Activated CD8-positive, alpha-beta T cell treated with anti-CD3 and anti-CD28 coated beads, Interleukin-2, amount 10 ng/mL, durations not matched to agents 7 days and 5 days (primary cell): ENCODE measurements at regions of chr16 and their contacts with region 1.

Region 1: GRCh38 chr16:50024684-50025536 is at the start of gene CNEP1R1:
- DNase-seq: peak; percentile 95
- ATAC-seq: peak; percentile 99
- H3K4me3 Mint-ChIP-seq: peak within 1 kb of the TSS; percentile 94
- H3K27ac Mint-ChIP-seq: peak within 1 kb of the TSS; percentile 92
- H3K4me1 Mint-ChIP-seq: peaks cover 14% of the 10 kb centered on the region
- H3K27me3 Mint-ChIP-seq: peaks cover 4% of the 10 kb centered on the region
- total RNA-seq, gene CNEP1R1: 25.1 to 26.9 TPM

Region 2: GRCh38 chr16:49839017-49839825 is 185.7 kb before region 1 on chr16:
- CTCF ChIA-PET with region 1: no interaction called
- POLR2A ChIA-PET with region 1: no interaction called
- DNase-seq: no peak
- ATAC-seq: no peak
- H3K4me3 Mint-ChIP-seq: no peak overlapping the region
- H3K27ac Mint-ChIP-seq: no peak overlapping the region
- H3K4me1 Mint-ChIP-seq: no peaks in the 10 kb centered on the region
- H3K27me3 Mint-ChIP-seq: peaks cover 21% of the 10 kb centered on the region

Region 3: GRCh38 chr16:49977427-49977826 is 47.5 kb before region 1 on chr16:
- CTCF ChIA-PET with region 1: no interaction called
- POLR2A ChIA-PET with region 1: no interaction called
- DNase-seq: no peak
- ATAC-seq: no peak
- H3K4me3 Mint-ChIP-seq: no peak overlapping the region
- H3K27ac Mint-ChIP-seq: no peak overlapping the region
- H3K4me1 Mint-ChIP-seq: no peaks in the 10 kb centered on the region
- H3K27me3 Mint-ChIP-seq: peaks cover 5% of the 10 kb centered on the region

Region 4: DNA sequence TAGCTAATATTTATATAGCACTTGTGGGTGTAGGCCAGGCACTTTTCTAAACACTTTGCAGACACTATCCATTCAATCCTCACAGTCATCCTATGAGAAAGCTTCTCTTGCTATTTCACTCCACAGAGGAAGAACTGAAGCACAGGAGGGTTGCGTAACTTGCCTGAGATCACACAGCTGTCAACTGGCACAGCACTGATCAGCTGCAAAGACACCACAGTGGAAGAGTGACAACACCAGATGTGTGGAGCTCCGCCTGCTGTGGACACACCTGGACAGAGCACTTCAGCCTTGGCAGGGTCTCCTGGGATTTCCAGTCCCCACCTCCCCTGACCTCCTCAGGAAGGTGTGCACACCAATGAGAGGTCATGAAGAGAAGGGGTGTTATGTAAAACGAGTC is 13.2 kb before region 1 on chr16:
- CTCF ChIA-PET with region 1: interaction called, 12 read pairs
- POLR2A ChIA-PET with region 1: no interaction called
- DNase-seq: no peak
- ATAC-seq: no peak
- H3K4me3 Mint-ChIP-seq: no peak overlapping the region
- H3K27ac Mint-ChIP-seq: no peak overlapping the region
- H3K4me1 Mint-ChIP-seq: no peaks in the 10 kb centered on the region
- H3K27me3 Mint-ChIP-seq: peaks cover 2% of the 10 kb centered on the region

Region 5: DNA sequence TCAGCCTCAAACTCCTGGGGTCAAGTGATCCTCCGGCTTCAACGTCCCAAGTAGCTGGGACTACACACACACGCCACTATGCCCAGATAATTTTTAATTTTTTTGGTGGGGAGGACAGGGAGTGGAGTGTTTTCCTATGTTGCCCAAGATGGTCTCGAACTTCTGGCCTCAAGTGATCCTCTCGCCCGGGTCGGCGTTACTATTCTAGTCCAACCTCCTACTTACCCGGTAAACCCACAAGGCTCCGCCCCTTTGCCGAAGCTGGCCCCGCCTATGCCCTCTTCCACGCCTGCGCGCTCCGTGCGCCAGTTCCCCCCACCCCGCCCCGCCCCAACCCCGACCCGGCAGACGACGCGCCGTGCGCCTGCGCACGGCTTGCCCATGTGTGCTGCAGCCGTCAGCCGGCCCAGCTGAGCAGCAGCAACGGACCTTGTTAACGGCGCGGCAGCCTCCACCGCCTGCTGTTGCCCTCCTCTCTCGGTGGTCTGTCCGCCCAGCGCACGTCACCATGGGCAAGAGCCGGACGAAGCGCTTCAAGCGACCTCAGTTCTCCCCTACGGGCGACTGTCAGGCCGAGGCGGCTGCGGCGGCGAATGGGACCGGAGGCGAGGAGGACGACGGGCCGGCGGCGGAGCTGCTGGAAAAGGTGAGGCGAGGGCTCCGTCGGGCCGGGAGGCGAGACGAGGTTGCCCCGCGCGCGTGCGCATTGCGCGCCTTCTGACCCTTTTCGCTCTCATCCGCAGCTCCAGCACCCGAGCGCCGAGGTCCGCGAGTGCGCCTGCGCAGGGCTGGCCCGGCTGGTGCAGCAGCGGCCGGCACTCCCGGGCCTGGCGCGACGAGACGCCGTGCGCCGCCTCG is 40.9 kb after region 1 on chr16 and contains the start of gene HEATR3:
- CTCF ChIA-PET with region 1: interaction called, 104 read pairs
- POLR2A ChIA-PET with region 1: interaction called, 3 read pairs
- DNase-seq: peak; percentile 95
- ATAC-seq: peak; percentile 92
- H3K4me3 Mint-ChIP-seq: peak within 1 kb of the TSS; percentile 90
- H3K27ac Mint-ChIP-seq: peak within 1 kb of the TSS; percentile 94
- H3K4me1 Mint-ChIP-seq: peaks cover 39% of the 10 kb centered on the region
- H3K27me3 Mint-ChIP-seq: peaks cover 3% of the 10 kb centered on the region
- total RNA-seq, gene HEATR3: 29.7 to 31.7 TPM

Region 6: GRCh38 chr16:50152807-50153452 is 128.0 kb after region 1 on chr16 and contains the start of gene TENT4B:
- CTCF ChIA-PET with region 1: interaction called, 23 read pairs
- POLR2A ChIA-PET with region 1: no interaction called
- DNase-seq: peak; percentile 91
- ATAC-seq: peak; percentile 80
- H3K4me3 Mint-ChIP-seq: peak within 1 kb of the TSS; percentile 88
- H3K27ac Mint-ChIP-seq: peak within 1 kb of the TSS; percentile 95
- H3K4me1 Mint-ChIP-seq: peaks cover 32% of the 10 kb centered on the region
- H3K27me3 Mint-ChIP-seq: no peaks in the 10 kb centered on the region
- total RNA-seq, gene TENT4B: 17.3 to 18.0 TPM

Region 7: DNA sequence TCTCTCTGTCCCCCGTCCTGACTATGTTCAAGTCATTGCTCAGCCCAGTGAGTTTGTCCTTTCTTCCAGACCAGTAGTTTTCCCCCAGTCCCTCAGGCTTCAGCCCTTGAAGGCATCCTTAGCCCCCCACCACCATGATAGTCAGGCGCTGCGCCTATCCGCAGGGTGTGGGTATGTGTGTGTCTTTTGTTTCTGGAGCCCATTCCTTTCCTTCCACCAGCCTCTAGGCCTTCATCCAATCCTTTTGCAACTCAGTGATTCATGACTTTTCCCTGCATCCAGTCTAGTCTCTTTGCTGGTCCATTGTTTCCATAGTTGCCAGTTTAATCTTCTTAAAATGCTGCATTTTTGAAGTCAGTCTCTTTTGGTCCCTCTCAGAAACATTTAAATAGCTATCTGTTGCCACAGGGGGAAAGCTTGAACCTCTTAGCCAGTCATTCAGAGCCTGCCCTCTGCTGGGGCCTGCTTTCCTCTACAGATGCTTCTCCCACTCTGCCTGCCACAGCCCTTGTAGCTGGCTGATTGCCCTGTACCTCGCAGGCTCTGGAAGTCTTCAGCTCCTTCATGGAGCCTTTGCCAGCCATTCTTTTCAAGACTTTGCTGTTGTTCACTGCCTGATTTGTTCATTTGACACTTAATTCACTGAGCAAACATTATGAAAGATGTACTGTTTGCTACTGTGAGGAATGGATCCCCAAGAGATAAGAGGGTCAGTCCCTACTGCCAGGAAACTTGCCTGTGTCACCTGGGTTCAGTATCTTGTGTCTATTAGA is 185.5 kb after region 1 on chr16:
- CTCF ChIA-PET with region 1: interaction called, 135 read pairs
- POLR2A ChIA-PET with region 1: interaction called, 10 read pairs
- DNase-seq: peak; percentile 80
- ATAC-seq: peak; percentile 95
- H3K4me3 Mint-ChIP-seq: no peak overlapping the region
- H3K27ac Mint-ChIP-seq: peak overlapping the region; percentile 41
- H3K4me1 Mint-ChIP-seq: peaks cover 32% of the 10 kb centered on the region
- H3K27me3 Mint-ChIP-seq: no peaks in the 10 kb centered on the region

Region 8: GRCh38 chr16:50354629-50355456 is 329.9 kb after region 1 on chr16:
- CTCF ChIA-PET with region 1: interaction called, 27 read pairs
- POLR2A ChIA-PET with region 1: interaction called, 3 read pairs
- DNase-seq: no peak
- ATAC-seq: no peak
- H3K4me3 Mint-ChIP-seq: no peak overlapping the region
- H3K27ac Mint-ChIP-seq: no peak overlapping the region
- H3K4me1 Mint-ChIP-seq: peaks cover 30% of the 10 kb centered on the region
- H3K27me3 Mint-ChIP-seq: no peaks in the 10 kb centered on the region